ENCODE measurements at regions of chr16 and their contacts with region 1.

Region 1: GRCh38 chr16:71845639-71846430 is at the start of gene ATXN1L:
- DNase-seq: peak; percentile 92
- H3K4me3 Mint-ChIP-seq: peak within 1 kb of the TSS; percentile 89
- H3K27ac Mint-ChIP-seq: peak within 1 kb of the TSS; percentile 94
- H3K4me1 Mint-ChIP-seq: peaks cover 27% of the 10 kb centered on the region
- H3K27me3 Mint-ChIP-seq: no peaks in the 10 kb centered on the region
- total RNA-seq, gene ATXN1L: 17.2 and 19.7 TPM in 2 replicates

Region 2: DNA sequence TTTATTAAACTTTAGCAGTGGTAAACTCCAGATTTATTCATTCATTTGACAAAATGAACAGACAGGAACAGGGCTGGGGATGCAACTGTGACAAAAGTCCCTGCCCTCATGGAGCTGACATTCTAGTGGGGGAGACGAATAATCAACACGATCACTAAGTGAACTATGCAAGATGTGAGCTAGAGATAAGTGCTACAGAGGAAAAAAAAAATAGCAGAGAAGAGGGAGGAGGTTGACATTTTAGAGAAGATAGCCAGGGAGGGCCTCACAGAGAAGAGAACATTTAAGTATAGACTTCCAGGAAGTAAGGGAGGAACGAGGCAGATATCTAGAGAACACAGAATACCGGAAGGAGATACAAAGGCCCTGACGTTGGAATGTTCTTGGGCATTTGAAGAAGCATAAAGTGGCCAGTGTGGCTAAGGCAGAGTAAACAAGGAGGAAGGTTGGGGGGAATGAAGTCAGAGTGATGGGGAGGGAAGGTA is 19.3 kb before region 1 on chr16:
- intact Hi-C with region 1: no loop called
- DNase-seq: no peak
- H3K4me3 Mint-ChIP-seq: no peak overlapping the region
- H3K27ac Mint-ChIP-seq: peak overlapping the region; percentile 26
- H3K4me1 Mint-ChIP-seq: peaks cover 7% of the 10 kb centered on the region
- H3K27me3 Mint-ChIP-seq: no peaks in the 10 kb centered on the region

Region 3: DNA sequence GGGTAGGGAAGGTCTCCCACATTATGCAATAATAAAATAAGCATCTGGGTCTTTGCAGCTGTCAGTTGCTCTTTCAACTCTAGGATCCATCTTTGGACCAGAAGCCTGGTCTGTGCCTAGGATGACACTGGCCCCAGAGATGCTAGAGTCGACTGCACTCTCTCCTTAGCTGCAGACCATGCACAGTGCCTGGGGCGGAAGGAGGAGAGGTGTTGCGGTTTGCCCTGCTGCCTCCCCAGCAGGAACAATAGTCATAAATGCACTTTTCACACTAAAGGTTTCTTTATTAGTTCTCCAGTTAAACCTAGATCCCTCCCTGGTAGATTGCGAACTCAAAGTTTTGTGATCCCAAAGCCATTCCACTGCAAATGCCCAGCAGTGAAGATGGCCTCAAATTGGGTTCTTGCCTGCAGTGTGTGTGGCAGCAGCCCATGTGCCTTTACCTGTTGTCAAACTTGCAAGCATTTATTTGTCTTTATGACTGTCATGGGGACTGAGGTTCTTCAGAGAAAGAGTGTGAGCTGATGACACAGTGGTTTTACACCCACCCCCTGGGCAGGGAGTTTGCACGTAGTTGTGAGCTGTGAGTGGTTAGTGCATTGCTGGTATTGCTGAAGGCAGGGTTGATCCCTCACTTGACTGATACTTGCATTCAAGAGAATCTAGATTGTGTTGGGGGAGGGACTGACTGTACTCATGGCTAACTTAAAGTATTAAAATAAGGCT is 10.3 kb after region 1 on chr16:
- intact Hi-C with region 1: no loop called
- DNase-seq: no peak
- H3K4me3 Mint-ChIP-seq: no peak overlapping the region
- H3K27ac Mint-ChIP-seq: peak overlapping the region; percentile 86
- H3K4me1 Mint-ChIP-seq: peaks cover 18% of the 10 kb centered on the region
- H3K27me3 Mint-ChIP-seq: no peaks in the 10 kb centered on the region

Region 4: GRCh38 chr16:71867939-71868338 is 22.1 kb after region 1 on chr16:
- intact Hi-C with region 1: loop called (anchors 1 kb)
- DNase-seq: no peak
- H3K4me3 Mint-ChIP-seq: no peak overlapping the region
- H3K27ac Mint-ChIP-seq: no peak overlapping the region
- H3K4me1 Mint-ChIP-seq: peaks cover 18% of the 10 kb centered on the region
- H3K27me3 Mint-ChIP-seq: no peaks in the 10 kb centered on the region

Region 5: GRCh38 chr16:71889147-71889546 is 43.3 kb after region 1 on chr16:
- intact Hi-C with region 1: no loop called
- DNase-seq: no peak
- H3K4me3 Mint-ChIP-seq: no peak overlapping the region
- H3K27ac Mint-ChIP-seq: no peak overlapping the region
- H3K4me1 Mint-ChIP-seq: peaks cover 13% of the 10 kb centered on the region
- H3K27me3 Mint-ChIP-seq: peaks cover 9% of the 10 kb centered on the region